Astrocyte of the cerebellum (primary cell): ENCODE measurements at regions of chr1 and their contacts with region 1.

Region 1: DNA sequence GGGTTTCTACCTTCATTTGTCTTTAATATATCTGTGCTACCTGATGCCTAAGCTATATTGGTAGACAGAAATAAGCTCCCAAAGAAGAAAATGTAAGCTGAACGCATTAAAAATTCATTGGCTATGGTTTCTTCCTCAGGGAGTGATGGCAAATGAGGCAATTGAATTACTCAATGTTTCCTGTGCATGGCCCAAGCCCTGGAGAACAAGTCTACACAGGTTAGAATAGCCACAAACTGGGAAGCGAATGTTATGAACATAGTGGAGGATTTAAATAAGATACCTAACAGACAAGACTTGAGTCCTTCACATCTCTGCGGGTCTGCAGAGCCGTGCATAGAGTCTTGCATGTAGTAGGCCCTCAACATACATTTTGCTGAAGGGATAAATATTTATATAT is 350.3 kb downstream of the RWDD3 start:
- DNase-seq: no peak
- H3K4me3 ChIP-seq: no peak overlapping the region
- CTCF ChIP-seq: no peak

Region 2: DNA sequence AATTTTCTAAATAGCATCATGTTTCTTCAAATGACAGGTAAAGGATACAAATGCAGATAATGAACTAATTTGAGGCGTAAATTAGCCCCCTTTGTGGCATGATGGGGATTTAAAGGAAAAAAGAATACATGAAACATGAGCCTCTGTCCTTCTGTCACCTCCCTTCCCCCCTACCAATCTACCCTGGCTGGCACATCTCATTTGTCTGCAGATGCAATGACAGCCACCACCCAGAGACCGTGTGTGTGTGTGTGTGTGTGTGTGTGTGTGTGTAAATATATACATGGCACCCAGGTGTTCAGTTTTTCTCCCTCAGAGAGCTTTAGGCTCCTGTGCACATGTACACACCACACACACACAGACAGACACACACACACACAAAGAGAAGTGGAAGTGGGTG is 100.8 kb after region 1 on chr1:
- in situ Hi-C with region 1: loop called (anchors 5 kb)
- DNase-seq: no peak
- H3K4me3 ChIP-seq: no peak overlapping the region
- CTCF ChIP-seq: no peak